ENCODE measurements at regions of chr18 and their contacts with region 1.

Region 1: GRCh38 chr18:5879479-5879882 is 15.8 kb downstream of the TMEM200C start:
- DNase-seq: peak; percentile 69
- H3K4me3 ChIP-seq: no peak overlapping the region
- H3K27ac ChIP-seq: no peak overlapping the region
- H3K4me1 ChIP-seq: no peaks in the 10 kb centered on the region
- H3K27me3 ChIP-seq: no peaks in the 10 kb centered on the region

Region 2: DNA sequence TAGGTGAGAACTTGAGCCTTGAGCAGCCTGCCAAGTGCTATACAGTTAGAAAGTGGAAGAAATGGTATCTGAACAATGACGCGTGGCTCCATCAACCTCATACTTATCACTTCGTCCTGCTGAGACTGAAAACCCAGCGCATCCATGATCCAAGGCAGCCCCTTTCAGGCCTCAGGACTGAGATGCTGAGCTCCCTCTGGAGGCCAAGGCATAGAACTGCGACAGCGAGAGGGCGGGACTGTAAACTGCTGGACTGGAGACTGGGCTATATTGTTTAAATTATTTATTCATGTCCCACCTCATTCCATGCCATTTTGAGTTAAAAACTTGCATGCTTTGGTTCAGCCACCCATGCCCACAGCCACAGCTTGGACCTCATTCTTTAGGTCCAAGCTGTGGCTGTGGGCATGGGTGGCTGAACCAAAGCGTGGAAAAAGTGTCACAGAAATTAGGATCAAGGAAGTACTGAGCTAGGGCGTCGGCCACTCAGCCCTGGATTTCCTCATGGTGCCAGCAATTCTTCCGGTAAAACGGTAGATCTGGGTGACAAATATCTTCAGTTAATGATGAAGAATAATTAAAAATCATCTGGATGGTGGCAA is 339.7 kb after region 1 on chr18:
- in situ Hi-C with region 1: loop called (anchors 10 kb)
- DNase-seq: peak; percentile 72
- H3K4me3 ChIP-seq: no peak overlapping the region
- H3K27ac ChIP-seq: no peak overlapping the region
- H3K4me1 ChIP-seq: no peaks in the 10 kb centered on the region
- H3K27me3 ChIP-seq: no peaks in the 10 kb centered on the region; the same call in 1 of the 2 replicates

Region 3: DNA sequence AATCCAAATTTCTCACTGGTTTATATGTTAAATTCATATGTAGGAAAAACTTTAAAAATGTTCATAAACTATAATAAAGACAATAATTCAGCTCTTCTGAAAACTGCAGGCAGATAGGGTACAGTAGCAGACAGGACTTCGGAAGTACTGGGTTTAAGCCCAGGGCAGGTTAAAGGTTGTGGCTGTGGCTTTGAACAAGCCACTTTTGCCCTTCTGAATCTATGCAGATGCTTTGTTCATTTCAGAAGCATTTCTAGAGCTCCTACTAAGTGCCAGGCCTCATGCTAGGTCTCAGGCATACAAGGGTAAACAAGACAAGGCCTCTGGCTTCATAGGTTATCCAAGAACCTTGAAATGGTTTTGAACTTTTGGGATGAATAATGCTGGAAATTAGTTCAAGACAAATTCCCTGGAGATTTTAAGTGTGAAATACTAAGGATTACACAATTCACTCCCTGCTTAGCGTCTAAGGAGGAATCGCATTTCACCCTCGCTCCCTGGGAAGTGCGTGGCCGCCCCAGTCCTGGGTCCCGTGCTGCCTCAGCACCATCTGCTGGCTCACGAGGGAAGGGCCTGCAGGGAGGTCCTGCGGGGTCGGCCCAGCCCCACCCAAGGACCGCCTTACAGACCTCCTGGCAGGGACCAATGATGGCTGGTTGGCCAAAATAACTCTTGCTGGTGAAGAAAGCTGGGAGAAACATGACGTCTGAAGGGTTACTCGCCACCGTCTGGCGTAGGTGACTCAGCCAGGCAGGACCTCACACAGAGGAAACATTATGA is 602.9 kb after region 1 on chr18:
- in situ Hi-C with region 1: loop called (anchors 10 kb)
- DNase-seq: peak; percentile 85
- H3K4me3 ChIP-seq: no peak overlapping the region
- H3K27ac ChIP-seq: no peak overlapping the region
- H3K4me1 ChIP-seq: no peaks in the 10 kb centered on the region
- H3K27me3 ChIP-seq: no peaks in the 10 kb centered on the region; the same call in 1 of the 2 replicates